ENCODE measurements at regions of chr9 and their contacts with region 1.

Region 1: GRCh38 chr9:15552636-15553527 is at the start of gene CCDC171:
- DNase-seq: peak; percentile 80 to 89 (median 85)
- ATAC-seq: peak; percentile 92
- H3K4me3 ChIP-seq: peak within 1 kb of the TSS; percentile 65
- H3K4me3 Mint-ChIP-seq: peak within 1 kb of the TSS; percentile 88 to 97 (median 94)
- H3K27ac ChIP-seq: peak within 1 kb of the TSS; percentile 66
- H3K27ac Mint-ChIP-seq: peak within 1 kb of the TSS; percentile 73 to 93 (median 86)
- H3K4me1 ChIP-seq: peaks cover 0 to 11% of the 10 kb centered on the region in 2 donors
- H3K4me1 Mint-ChIP-seq: peaks cover 0 to 23% (median 12%) of the 10 kb centered on the region in 7 donors
- H3K27me3 ChIP-seq: no peaks in the 10 kb centered on the region
- H3K27me3 Mint-ChIP-seq: peaks cover 0 to 39% (median 0%) of the 10 kb centered on the region in 5 donors
- total RNA-seq, gene CCDC171: 0.77 to 3.7 (median 2.7) TPM

Region 2: DNA sequence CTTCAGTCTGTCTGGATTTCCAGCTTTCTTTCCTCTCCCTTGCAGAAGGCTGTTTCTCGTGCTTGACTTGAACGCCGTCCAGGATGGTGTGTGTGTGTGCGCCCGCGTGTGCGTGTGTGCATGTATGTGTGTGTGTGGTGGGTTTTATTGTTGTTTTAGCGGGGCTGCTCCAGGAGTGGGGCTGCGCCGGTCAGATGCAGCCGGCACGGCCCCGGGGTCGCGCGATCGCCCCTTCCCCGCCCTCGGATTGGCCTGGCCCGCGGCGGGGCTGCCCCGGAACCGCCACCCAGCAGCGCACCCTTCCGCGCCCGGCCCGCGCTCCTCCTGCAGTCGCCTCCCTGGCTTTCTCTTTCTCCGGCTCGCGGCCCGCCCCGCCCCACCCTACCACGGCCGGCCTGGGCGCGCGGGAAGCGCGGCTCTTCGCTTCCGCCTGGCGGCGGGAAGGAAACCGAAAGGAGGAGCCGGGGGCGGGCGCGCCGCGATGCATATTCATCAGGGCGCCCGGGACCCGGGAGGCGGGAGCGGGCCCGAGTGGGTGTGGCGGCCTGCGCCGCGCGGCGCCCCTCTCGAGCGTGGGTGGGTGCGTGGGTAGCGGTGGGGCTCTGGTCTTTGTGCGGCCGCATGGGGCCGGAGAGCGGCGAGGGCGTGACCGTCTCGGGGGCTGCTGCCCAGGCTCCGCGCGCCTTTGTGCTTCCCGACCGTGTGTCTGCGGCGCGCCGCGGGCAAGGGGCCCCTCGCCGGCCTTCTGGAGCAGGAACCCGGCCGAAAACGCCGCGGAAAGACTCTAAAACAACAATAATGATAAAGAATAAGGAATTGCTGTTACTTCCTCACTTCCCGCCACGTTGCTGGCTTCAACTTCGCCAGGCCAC is 1230.4 kb before region 1 on chr9:
- CTCF ChIA-PET with region 1: no interaction called
- POLR2A ChIA-PET with region 1: no interaction called
- intact Hi-C with region 1: loop called in 1 of 2 experiments (anchors 5 kb)
- DNase-seq: peak; percentile 26 to 87 (median 33)
- ATAC-seq: peak; percentile 87
- H3K4me3 ChIP-seq: peak overlapping the region; percentile 56
- H3K4me3 Mint-ChIP-seq: peak overlapping the region; percentile 75 to 94 (median 89)
- H3K27ac ChIP-seq: no peak overlapping the region
- H3K27ac Mint-ChIP-seq: peak overlapping the region in 2 of 9 donors; percentile 76
- H3K4me1 ChIP-seq: no peaks in the 10 kb centered on the region
- H3K4me1 Mint-ChIP-seq: peaks cover 13 to 21% (median 20%) of the 10 kb centered on the region in 7 donors
- H3K27me3 ChIP-seq: peaks cover 0 to 8% of the 10 kb centered on the region in 2 donors
- H3K27me3 Mint-ChIP-seq: peaks cover 37 to 70% (median 66%) of the 10 kb centered on the region in 5 donors

Region 3: GRCh38 chr9:14627513-14627912 is 925.4 kb before region 1 on chr9:
- CTCF ChIA-PET with region 1: no interaction called
- POLR2A ChIA-PET with region 1: no interaction called
- intact Hi-C with region 1: no loop called
- DNase-seq: no peak
- ATAC-seq: no peak
- H3K4me3 ChIP-seq: no peak overlapping the region
- H3K4me3 Mint-ChIP-seq: no peak overlapping the region
- H3K27ac ChIP-seq: no peak overlapping the region
- H3K27ac Mint-ChIP-seq: no peak overlapping the region
- H3K4me1 ChIP-seq: no peaks in the 10 kb centered on the region
- H3K4me1 Mint-ChIP-seq: peaks cover 0 to 4% (median 0%) of the 10 kb centered on the region in 7 donors
- H3K27me3 ChIP-seq: no peaks in the 10 kb centered on the region
- H3K27me3 Mint-ChIP-seq: no peaks in the 10 kb centered on the region

Region 4: GRCh38 chr9:15295761-15296405 is 257.0 kb before region 1 on chr9:
- CTCF ChIA-PET with region 1: no interaction called
- POLR2A ChIA-PET with region 1: interaction called, 3 read pairs
- intact Hi-C with region 1: loop called in 1 of 2 experiments (anchors 5 kb)
- DNase-seq: peak in 7 of 9 donors; percentile 37 to 72 (median 53)
- ATAC-seq: peak; percentile 59
- H3K4me3 ChIP-seq: peak overlapping the region; percentile 41
- H3K4me3 Mint-ChIP-seq: peak overlapping the region; percentile 70 to 98 (median 84)
- H3K27ac ChIP-seq: peak overlapping the region; percentile 88
- H3K27ac Mint-ChIP-seq: peak overlapping the region; percentile 96 to 99 (median 98)
- H3K4me1 ChIP-seq: peaks cover 71 to 82% of the 10 kb centered on the region in 2 donors
- H3K4me1 Mint-ChIP-seq: peaks cover 61 to 93% (median 88%) of the 10 kb centered on the region in 7 donors
- H3K27me3 ChIP-seq: no peaks in the 10 kb centered on the region
- H3K27me3 Mint-ChIP-seq: no peaks in the 10 kb centered on the region

Region 5: GRCh38 chr9:15422372-15423230 is 130.3 kb before region 1 on chr9 and contains the start of gene SNAPC3:
- CTCF ChIA-PET with region 1: no interaction called
- POLR2A ChIA-PET with region 1: interaction called, 5 read pairs
- intact Hi-C with region 1: loop called (anchors 1 kb)
- DNase-seq: peak; percentile 86 to 96 (median 93)
- ATAC-seq: peak; percentile 99
- H3K4me3 ChIP-seq: peak within 1 kb of the TSS; percentile 90
- H3K4me3 Mint-ChIP-seq: peak within 1 kb of the TSS; percentile 89 to 95 (median 92)
- H3K27ac ChIP-seq: peak within 1 kb of the TSS; percentile 74
- H3K27ac Mint-ChIP-seq: peak within 1 kb of the TSS; percentile 89 to 96 (median 93)
- H3K4me1 ChIP-seq: peaks cover 0 to 8% of the 10 kb centered on the region in 2 donors
- H3K4me1 Mint-ChIP-seq: peaks cover 20 to 47% (median 45%) of the 10 kb centered on the region in 7 donors
- H3K27me3 ChIP-seq: no peaks in the 10 kb centered on the region
- H3K27me3 Mint-ChIP-seq: no peaks in the 10 kb centered on the region
- total RNA-seq, gene SNAPC3: 11.9 to 44.4 (median 33.5) TPM

Region 6: DNA sequence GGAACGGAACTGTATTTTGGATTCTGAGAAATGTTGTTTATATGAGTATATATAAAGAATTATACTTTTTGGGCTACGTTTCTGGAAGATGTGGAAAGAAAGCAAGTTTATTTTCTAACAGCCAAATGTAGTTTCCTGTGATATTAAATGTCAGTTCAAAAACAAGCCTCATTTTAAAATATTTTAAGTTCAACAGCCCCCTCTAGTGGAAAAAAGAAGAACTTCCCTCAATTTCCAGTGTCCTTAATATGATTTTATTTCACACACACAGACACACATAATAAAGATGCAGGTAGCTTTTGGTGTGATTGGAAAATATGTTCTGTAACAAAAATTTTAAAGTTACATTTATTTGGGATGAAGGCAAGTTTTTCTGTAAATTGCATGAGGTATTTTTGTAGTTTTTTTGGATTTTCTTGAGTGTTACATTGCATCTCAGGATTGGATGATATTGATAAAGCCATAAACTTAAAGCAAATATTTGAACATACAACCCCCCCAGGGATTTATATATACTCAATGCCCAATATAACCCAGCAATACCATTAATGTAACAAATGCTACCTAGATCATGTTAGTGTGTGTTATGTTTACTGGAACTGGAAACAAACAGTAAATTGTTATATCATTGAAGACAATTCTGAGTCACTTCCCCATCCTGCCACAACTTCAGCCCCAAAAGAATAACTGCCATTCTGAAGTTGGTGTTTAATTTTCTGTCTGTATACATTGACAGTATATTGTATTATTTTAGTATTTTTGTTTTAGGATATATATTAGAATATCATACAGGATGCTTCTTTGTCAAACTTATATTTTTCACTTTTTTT is 54.0 kb after region 1 on chr9:
- CTCF ChIA-PET with region 1: interaction called, 7 read pairs
- POLR2A ChIA-PET with region 1: interaction called, 3 read pairs
- intact Hi-C with region 1: loop called (anchors 1 to 2 kb)
- DNase-seq: peak in 7 of 9 donors; percentile 29 to 71 (median 60)
- ATAC-seq: peak; percentile 55
- H3K4me3 ChIP-seq: no peak overlapping the region
- H3K4me3 Mint-ChIP-seq: no peak overlapping the region
- H3K27ac ChIP-seq: no peak overlapping the region
- H3K27ac Mint-ChIP-seq: no peak overlapping the region
- H3K4me1 ChIP-seq: no peaks in the 10 kb centered on the region
- H3K4me1 Mint-ChIP-seq: peaks cover 0 to 7% (median 0%) of the 10 kb centered on the region in 7 donors
- H3K27me3 ChIP-seq: no peaks in the 10 kb centered on the region
- H3K27me3 Mint-ChIP-seq: no peaks in the 10 kb centered on the region

Region 7: DNA sequence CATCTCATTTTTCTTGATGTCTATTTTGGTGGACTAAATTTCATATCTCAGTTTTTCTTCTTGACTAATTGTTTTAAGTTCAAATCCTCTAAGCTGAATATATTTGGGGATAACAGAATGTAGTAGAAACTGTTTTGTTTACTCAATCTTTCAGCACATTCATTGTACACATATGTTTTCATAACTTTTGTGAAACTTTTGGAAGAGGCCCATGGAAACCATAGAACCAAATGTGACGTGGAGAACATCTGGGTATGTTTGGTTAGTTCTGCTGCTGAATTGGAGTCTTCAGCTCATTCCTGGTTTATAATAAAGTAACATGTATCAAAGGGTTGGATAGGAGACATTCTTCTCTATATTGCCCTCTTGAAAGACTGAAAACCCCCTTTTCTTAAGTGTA is 88.4 kb after region 1 on chr9:
- CTCF ChIA-PET with region 1: no interaction called
- POLR2A ChIA-PET with region 1: no interaction called
- intact Hi-C with region 1: no loop called
- DNase-seq: no peak
- ATAC-seq: no peak
- H3K4me3 ChIP-seq: no peak overlapping the region
- H3K4me3 Mint-ChIP-seq: no peak overlapping the region
- H3K27ac ChIP-seq: no peak overlapping the region
- H3K27ac Mint-ChIP-seq: no peak overlapping the region
- H3K4me1 ChIP-seq: no peaks in the 10 kb centered on the region
- H3K4me1 Mint-ChIP-seq: no peaks in the 10 kb centered on the region
- H3K27me3 ChIP-seq: no peaks in the 10 kb centered on the region
- H3K27me3 Mint-ChIP-seq: peaks cover 0 to 8% (median 6%) of the 10 kb centered on the region in 5 donors